ENCODE measurements at regions of chr1 and their contacts with region 1.

Region 1: DNA sequence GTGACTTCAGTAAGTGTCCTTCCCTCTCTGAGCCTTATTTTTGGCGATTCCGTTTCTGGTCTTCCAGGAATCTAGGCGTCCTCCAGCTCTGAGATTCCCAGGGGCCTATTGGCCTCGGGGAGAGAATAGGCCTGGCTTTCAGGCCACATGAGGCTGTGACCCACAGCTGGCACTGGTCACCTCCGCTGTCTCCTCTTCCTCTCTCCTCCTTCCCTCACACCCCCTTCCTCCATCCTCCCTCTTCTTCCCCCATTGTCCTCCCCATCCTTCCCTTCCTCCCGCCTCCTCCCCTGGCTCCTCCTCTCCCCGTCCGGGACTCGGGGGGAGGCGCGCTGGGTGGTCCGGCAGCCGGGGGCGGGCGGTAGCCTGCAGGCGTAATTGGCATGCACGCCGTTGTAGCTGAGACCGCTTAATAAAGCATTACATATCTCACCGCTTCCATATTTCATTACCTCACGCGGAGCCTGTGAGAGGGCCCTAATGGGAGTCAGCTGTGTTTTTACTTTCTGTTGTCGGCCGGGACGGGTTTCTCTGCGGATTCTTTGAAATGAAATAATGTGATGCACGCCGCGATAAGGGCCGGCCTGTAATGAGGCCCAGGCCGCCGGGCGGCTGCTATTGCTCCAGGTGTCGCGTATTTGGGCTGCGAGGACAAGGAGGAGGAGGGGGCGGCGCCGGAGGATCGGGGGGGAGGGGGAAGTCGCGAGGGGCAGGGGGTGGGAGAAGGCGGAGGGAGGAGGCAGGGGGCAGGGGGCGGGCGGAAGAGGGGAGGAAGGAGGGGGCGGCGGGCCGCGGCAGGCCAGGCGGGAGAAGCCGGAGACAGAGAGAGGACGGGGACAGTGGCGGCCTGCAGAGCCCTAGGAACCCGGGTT is 95.3 kb downstream of the FOXD2 start:
- DNase-seq: peak in 1 of 3 donors; percentile 37
- ATAC-seq: peak; percentile 43 to 67 (median 48)
- H3K4me3 ChIP-seq: peak overlapping the region; percentile 12 to 35 (median 28)
- H3K27ac ChIP-seq: no peak overlapping the region
- H3K4me1 ChIP-seq: no peaks in the 10 kb centered on the region
- H3K27me3 ChIP-seq: no peaks in the 10 kb centered on the region
- CTCF ChIP-seq: no peak
- POLR2A ChIP-seq: no peak

Region 2: DNA sequence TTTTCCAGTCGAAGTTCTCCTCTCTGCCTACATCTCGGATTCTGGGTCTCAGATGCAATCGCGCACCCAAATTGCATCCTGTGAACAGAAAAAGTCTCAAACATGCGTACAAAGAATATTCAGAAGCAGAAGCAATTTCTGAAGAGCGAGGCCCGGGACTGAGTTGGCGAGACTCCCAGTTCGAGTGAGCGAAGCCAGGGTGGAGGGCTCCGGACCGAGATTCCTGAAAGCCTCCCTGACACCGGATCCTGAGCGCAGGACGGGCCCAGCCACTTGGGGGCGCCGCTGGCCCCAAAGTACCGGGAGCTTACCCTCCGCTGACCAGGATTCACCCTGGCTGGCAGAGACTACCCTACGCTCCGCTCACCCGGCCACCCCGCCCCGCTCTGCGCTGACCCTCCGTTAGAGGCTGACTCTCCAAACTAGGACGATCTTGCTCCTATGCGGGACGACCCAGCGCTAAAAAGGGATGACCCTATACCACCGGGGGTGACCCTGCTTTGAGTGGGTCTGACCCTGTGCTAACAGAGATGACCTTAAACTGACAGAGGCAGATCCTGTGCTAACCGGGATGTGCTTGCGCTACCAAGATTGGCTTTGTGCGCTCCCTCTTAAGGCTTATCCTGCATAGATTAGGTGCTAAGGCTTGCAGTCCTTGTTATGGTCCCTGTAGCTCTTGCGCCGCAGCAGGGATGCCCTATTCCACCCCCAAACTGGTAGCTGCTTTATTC is 83.2 kb before region 1 on chr1:
- intact Hi-C with region 1: loop called in 1 of 2 experiments (anchors 10 kb)
- DNase-seq: peak; percentile 77 to 81 (median 77)
- ATAC-seq: peak; percentile 98 to 99 (median 98)
- H3K4me3 ChIP-seq: peak overlapping the region in 2 of 3 donors; percentile 7 to 26
- H3K27ac ChIP-seq: no peak overlapping the region
- H3K4me1 ChIP-seq: peaks cover 0 to 7% (median under 1%) of the 10 kb centered on the region in 4 donors
- H3K27me3 ChIP-seq: peaks cover 0 to 12% of the 10 kb centered on the region in 2 donors
- CTCF ChIP-seq: peak; percentile 74 to 88 (median 79)
- POLR2A ChIP-seq: no peak

Region 3: DNA sequence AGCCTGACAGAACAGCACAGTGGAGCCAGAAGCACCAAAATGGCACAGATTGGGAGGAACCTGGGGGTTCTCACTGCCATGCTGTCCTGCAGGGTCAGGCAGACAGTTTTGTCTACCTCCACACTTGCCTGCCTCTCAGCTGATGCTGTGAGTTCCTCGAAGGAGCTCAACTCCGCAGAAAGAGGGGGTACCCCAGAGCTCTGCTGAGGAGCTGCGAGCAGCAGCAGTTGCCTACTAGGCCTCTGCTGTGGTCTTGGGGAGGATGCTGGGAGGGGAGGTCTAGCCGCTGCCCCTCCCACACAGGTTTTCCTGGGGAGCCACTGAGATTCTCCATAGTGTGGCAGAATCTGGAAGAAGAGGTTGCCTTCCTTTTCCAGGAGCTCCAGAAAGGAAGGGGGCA is 97.2 kb after region 1 on chr1:
- intact Hi-C with region 1: no loop called
- DNase-seq: peak in 1 of 3 donors; percentile 11
- ATAC-seq: no peak
- H3K4me3 ChIP-seq: no peak overlapping the region
- H3K27ac ChIP-seq: no peak overlapping the region
- H3K4me1 ChIP-seq: no peaks in the 10 kb centered on the region
- H3K27me3 ChIP-seq: no peaks in the 10 kb centered on the region
- CTCF ChIP-seq: no peak
- POLR2A ChIP-seq: no peak